Body of pancreas (tissue), 4 donors: ENCODE measurements at regions of chr1 and their contacts with region 1.

Region 1: DNA sequence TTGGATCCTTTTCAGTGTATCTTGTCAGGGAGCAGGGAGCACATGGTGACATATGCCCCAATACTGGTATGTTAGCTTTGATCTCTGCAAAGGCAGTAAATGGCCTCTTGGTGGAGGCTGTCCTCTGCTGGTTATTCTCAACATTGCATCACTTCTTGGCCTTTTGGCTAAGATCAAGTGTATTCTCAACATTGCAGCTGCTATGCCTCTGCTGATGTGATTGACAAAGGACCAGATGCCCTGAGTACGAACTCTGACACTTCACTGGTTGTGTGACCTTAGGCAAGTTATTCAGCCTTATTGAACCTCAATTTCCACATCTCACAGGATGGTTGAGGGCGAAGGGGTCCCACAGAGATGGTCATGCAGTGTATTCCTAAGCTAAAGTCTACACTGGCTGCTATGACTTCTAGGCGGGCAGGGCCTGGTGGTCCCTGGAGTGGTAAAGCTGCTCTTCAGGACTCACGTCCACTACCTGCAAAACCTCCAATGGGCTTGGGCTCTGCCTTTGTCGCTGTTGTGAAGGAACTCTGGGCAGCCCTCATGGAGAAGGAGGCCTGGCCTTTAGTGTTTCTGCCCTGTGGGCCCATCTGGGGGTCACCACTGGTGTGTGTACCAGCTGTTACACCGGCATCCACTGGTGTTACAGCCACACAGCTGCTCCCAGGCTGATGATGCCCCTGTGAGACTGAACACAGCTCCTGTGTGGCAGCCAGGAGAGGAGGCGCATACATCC is 64.8 kb downstream of the DNTTIP2 start:
- DNase-seq: peak; percentile 59 to 80 (median 66)
- ATAC-seq: peak; percentile 84
- H3K4me3 ChIP-seq: no peak overlapping the region
- H3K27ac ChIP-seq: no peak overlapping the region
- H3K4me1 ChIP-seq: no peaks in the 10 kb centered on the region
- H3K27me3 ChIP-seq: no peaks in the 10 kb centered on the region
- CTCF ChIP-seq: peak; percentile 80 to 98 (median 97)
- POLR2A ChIP-seq: no peak

Region 2: GRCh38 chr1:93437976-93438605 is 376.1 kb before region 1 on chr1:
- intact Hi-C with region 1: loop called (anchors 10 kb)
- DNase-seq: no peak
- ATAC-seq: peak; percentile 79
- H3K4me3 ChIP-seq: no peak overlapping the region
- H3K27ac ChIP-seq: no peak overlapping the region
- H3K4me1 ChIP-seq: peaks cover 14% of the 10 kb centered on the region
- H3K27me3 ChIP-seq: no peaks in the 10 kb centered on the region
- CTCF ChIP-seq: peak; percentile 20 to 85 (median 77)
- POLR2A ChIP-seq: no peak

Region 3: DNA sequence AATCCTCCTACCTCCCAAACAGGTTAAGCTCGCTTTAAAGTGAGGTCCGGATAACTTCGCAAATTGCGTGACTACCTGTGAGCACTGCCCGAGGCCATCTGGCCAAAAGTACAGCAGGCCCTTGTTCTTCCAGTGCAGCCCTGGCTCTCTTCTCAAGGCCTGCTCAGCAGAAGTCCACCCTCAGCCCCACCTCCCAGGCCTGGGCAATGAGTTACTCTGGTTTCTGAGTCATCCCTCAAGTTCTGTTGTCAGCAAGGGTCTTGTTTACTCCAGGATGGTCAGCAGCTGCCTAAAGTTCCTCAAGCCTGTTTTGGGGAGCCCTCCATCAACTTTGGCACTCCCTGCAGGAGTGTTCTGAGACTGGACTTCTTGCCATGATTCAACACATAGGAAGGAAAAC is 234.3 kb before region 1 on chr1:
- intact Hi-C with region 1: no loop called
- DNase-seq: peak; percentile 36 to 81 (median 61)
- ATAC-seq: peak; percentile 62
- H3K4me3 ChIP-seq: no peak overlapping the region
- H3K27ac ChIP-seq: peak overlapping the region; percentile 33 to 77 (median 54)
- H3K4me1 ChIP-seq: peaks cover 64% of the 10 kb centered on the region
- H3K27me3 ChIP-seq: no peaks in the 10 kb centered on the region
- CTCF ChIP-seq: no peak
- POLR2A ChIP-seq: peak in 1 of 3 donors; percentile 17

Region 4: DNA sequence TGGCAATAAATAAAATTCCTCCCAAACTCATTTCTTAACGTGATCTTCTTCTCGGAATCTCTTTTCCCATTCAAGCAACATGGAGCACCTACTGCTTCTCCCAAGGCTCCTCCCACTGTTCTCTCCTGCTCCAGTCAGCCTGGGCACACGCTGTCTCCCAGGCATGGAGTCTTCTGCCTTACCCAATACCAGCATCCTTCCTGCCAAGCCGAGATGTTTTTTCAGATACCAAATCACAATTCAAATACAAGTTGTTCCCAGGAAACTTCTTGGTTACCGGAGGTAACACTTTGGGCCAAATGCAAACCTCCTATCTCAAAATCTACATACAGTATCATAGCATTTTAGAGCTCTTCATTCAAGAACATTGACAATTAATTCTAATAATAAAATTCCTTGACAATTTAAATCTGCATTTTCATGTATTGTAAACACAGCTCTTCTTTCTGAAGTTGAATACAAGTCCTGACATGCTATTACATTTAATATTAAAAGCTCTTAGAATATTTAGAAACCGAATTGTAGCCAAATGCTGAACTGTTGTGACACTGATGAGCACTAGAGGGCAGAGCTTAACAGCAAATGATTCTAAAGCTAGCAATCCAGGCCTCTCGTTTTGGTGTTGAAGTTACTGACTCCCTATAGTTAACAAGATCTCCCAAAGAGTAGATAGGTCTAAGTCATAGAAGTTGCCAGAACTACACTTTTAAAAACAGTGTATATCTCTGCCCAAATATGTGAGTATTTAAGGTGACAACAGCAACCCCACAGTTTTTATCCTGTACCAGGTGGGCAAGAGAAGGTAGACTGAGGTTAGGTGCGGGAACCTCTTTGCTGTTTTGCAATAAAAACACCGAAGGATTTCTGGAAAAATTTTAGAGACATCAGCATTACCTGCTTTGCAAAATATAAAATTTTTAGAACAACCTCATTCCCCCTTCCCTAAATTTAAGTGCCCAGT is 184.8 kb before region 1 on chr1:
- intact Hi-C with region 1: loop called (anchors 5 kb)
- DNase-seq: peak; percentile 55 to 74 (median 60)
- ATAC-seq: peak; percentile 85
- H3K4me3 ChIP-seq: no peak overlapping the region
- H3K27ac ChIP-seq: no peak overlapping the region
- H3K4me1 ChIP-seq: no peaks in the 10 kb centered on the region
- H3K27me3 ChIP-seq: no peaks in the 10 kb centered on the region
- CTCF ChIP-seq: peak; percentile 31 to 92 (median 80)
- POLR2A ChIP-seq: no peak

Region 5: GRCh38 chr1:93909146-93910050 is 95.2 kb after region 1 on chr1 and contains the start of gene GCLM:
- intact Hi-C with region 1: no loop called
- DNase-seq: peak; percentile 93 to 97 (median 95)
- ATAC-seq: peak; percentile 96
- H3K4me3 ChIP-seq: peak within 1 kb of the TSS; percentile 39 to 77
- H3K27ac ChIP-seq: peak within 1 kb of the TSS; percentile 66 to 93 (median 90)
- H3K4me1 ChIP-seq: peaks cover 18% of the 10 kb centered on the region
- H3K27me3 ChIP-seq: no peaks in the 10 kb centered on the region
- CTCF ChIP-seq: peak; percentile 66 to 99 (median 94)
- POLR2A ChIP-seq: peak; percentile 76 to 85 (median 85)
- total RNA-seq, gene GCLM: 3.6 to 7.3 TPM

Region 6: GRCh38 chr1:94105957-94106529 is 291.8 kb after region 1 on chr1:
- intact Hi-C with region 1: no loop called
- DNase-seq: no peak
- ATAC-seq: no peak
- H3K4me3 ChIP-seq: no peak overlapping the region
- H3K27ac ChIP-seq: no peak overlapping the region
- H3K4me1 ChIP-seq: no peaks in the 10 kb centered on the region
- H3K27me3 ChIP-seq: no peaks in the 10 kb centered on the region
- CTCF ChIP-seq: no peak
- POLR2A ChIP-seq: no peak